ENCODE measurements at regions of chr6 and their contacts with region 1.

Region 1: DNA sequence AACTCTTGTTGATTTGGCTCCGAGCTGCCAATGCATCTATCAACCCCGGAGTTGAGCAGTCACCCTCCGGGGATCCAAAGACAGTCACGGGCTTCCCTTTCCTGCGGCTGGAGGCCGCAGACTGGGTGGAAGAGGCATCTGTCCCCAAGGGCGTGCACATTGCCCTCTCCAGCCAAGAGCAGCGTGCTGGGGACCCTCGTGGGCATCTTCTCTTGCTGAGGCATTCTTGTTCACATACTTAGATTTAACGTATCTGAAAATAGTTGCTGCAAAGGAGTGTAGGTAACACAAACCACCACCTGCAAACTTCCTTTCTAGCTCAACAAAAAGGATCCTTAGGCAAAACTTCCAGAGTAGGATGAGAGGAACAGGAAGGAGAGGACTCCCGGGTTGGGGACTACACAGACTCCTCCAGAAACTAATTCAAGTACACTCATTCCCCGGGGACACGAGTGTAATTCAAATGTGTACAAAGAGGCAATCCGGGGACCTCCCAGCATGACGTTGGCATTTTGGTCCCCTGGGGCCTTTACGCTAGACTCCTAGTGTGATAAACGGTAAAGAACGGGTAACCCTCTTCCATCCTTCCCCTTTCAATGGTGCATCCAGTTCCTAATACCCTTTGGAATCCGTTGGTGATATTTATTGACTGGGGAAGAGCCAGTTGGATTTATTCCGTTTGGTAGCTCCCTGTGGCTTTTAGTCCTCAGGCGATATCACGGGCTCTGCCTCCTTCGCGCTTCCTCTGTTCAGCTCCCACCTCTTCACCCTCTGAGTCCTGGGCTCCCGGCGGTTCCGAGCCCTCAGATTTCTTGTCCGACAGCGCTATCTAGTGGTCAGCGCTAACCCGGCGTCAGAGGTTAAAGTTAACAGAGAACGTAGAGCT is 2.7 kb upstream of the COL12A1 start:
- DNase-seq: peak; percentile 85
- ATAC-seq: peak; percentile 39
- H3K4me3 ChIP-seq: peak overlapping the region; percentile 27; the same call in 1 of the 2 replicates
- H3K27ac ChIP-seq: no peak overlapping the region
- H3K4me1 ChIP-seq: peaks cover 19% of the 10 kb centered on the region
- H3K27me3 ChIP-seq: no peaks in the 10 kb centered on the region
- CTCF ChIP-seq: peak; percentile 91

Region 2: GRCh38 chr6:73854998-73855718 is 1353.4 kb before region 1 on chr6:
- CTCF ChIA-PET with region 1: no interaction called
- POLR2A ChIA-PET with region 1: no interaction called
- intact Hi-C with region 1: loop called (anchors 10 kb)
- DNase-seq: peak; percentile 76
- ATAC-seq: no peak
- H3K4me3 ChIP-seq: no peak overlapping the region
- H3K27ac ChIP-seq: no peak overlapping the region
- H3K4me1 ChIP-seq: no peaks in the 10 kb centered on the region
- H3K27me3 ChIP-seq: no peaks in the 10 kb centered on the region
- CTCF ChIP-seq: peak; percentile 77

Region 3: DNA sequence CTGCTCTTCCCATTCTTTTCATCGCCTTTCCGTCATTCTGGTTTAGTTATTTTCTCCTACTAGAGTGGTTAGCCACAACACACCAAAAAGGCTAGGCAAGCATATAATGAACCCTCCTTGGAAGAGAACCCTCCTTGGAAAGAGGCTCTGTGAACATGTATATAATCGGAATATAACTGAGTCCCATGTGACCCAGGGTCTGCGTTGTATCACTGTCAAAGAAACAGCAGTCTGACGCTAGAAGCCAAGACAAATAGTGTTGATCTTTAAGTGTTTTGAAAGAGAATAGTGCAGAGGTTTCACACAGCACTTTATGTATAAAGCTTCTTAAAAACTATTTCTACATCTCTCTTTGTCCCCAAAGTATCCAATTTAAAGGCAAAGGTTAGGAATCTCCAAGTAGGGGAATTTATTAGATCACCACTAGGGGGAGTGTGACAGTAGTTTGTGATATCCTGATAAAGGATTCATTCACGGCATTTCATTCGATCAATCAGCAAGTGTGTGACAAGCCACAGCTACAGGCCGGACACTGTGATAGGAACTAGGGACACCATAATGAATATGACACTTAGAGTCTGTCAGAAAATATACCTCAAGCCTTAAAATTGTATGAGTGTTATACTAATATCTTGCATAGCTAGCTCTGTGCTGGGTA is 1117.3 kb before region 1 on chr6:
- CTCF ChIA-PET with region 1: interaction called, 4 read pairs
- POLR2A ChIA-PET with region 1: no interaction called
- intact Hi-C with region 1: loop called (anchors 5 kb)
- DNase-seq: peak; percentile 58
- ATAC-seq: peak; percentile 43; the same call in 1 of the 2 replicates
- H3K4me3 ChIP-seq: no peak overlapping the region
- H3K27ac ChIP-seq: no peak overlapping the region
- H3K4me1 ChIP-seq: no peaks in the 10 kb centered on the region
- H3K27me3 ChIP-seq: no peaks in the 10 kb centered on the region
- CTCF ChIP-seq: peak; percentile 75

Region 4: GRCh38 chr6:74519163-74519562 is 689.4 kb before region 1 on chr6:
- CTCF ChIA-PET with region 1: no interaction called
- POLR2A ChIA-PET with region 1: no interaction called
- intact Hi-C with region 1: loop called (anchors 10 kb)
- DNase-seq: peak; percentile 38
- ATAC-seq: peak; percentile 90
- H3K4me3 ChIP-seq: no peak overlapping the region
- H3K27ac ChIP-seq: no peak overlapping the region
- H3K4me1 ChIP-seq: no peaks in the 10 kb centered on the region
- H3K27me3 ChIP-seq: no peaks in the 10 kb centered on the region
- CTCF ChIP-seq: no peak

Region 5: GRCh38 chr6:74899416-74899815 is 309.1 kb before region 1 on chr6:
- CTCF ChIA-PET with region 1: interaction called, 5 read pairs
- POLR2A ChIA-PET with region 1: no interaction called
- intact Hi-C with region 1: loop called (anchors 1 kb)
- DNase-seq: peak; percentile 68
- ATAC-seq: peak; percentile 58
- H3K4me3 ChIP-seq: no peak overlapping the region
- H3K27ac ChIP-seq: no peak overlapping the region
- H3K4me1 ChIP-seq: 0 out of 2 replicates have a peak, but pooled peaks cover 3% of the 10 kb centered on the region
- H3K27me3 ChIP-seq: no peaks in the 10 kb centered on the region
- CTCF ChIP-seq: peak; percentile 73

Region 6: DNA sequence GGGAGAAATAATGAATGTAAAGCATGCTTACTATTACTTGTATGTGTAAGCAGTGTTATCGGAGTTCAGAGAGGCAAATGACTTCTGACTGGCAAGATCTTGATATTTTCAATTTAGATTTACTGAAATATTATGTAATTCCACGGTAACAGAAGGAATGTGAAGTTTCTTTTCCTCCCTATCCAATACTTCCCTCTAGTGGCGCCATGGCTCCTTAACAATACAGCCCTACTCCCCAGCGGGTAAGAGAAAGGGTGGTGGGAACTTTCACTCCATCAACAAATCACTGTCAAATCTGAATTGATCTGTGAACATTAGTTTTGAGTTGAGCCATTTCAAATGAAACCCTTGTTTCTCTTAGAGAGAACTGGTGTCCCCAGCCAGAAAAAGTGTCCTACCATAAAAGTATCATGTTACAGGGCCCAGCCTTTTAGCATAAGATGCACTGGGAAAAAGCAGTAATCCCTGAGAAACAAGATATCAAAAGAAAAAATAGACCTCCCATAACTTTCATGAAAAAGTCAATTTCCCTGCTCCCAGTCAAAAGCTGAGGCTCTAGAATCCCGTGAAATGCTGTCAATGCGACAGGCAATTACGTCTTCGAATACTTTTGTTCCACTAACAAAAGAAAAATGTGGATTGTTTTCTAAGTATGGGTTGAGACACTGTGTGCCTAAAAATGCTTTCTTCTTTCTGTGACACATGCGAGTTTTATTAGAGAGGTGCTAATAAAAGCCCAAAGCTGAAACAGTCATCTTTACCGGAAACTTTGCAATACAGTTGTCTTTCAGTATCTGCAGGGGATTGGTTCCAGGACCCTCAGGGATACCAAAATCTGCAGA is 22.2 kb after region 1 on chr6:
- CTCF ChIA-PET with region 1: interaction called, 5 read pairs
- POLR2A ChIA-PET with region 1: no interaction called
- intact Hi-C with region 1: loop called (anchors 1 kb)
- DNase-seq: peak; percentile 51
- ATAC-seq: peak; percentile 85
- H3K4me3 ChIP-seq: no peak overlapping the region
- H3K27ac ChIP-seq: no peak overlapping the region
- H3K4me1 ChIP-seq: peaks cover 6% of the 10 kb centered on the region
- H3K27me3 ChIP-seq: no peaks in the 10 kb centered on the region
- CTCF ChIP-seq: peak; percentile 78